ENCODE measurements at regions of chr12 and their contacts with region 1.

Region 1: GRCh38 chr12:52358575-52359350 is 8.5 kb downstream of the KRT85 start:
- DNase-seq: peak; percentile 15 to 66
- ATAC-seq: peak; percentile 41 to 77 (median 49)
- H3K4me3 ChIP-seq: no peak overlapping the region
- H3K4me3 Mint-ChIP-seq: no peak overlapping the region
- H3K27ac ChIP-seq: no peak overlapping the region
- H3K27ac Mint-ChIP-seq: peak overlapping the region in 1 of 2 donors; percentile 25
- H3K4me1 ChIP-seq: peaks cover 44% of the 10 kb centered on the region
- H3K4me1 Mint-ChIP-seq: peaks cover 40 to 44% of the 10 kb centered on the region in 2 donors
- H3K27me3 ChIP-seq: peaks cover 44% of the 10 kb centered on the region
- H3K27me3 Mint-ChIP-seq: peaks cover 48 to 55% of the 10 kb centered on the region in 2 donors
- CTCF ChIP-seq: no peak

Region 2: GRCh38 chr12:52307836-52308805 is 50.6 kb before region 1 on chr12:
- intact Hi-C with region 1: loop called (anchors 10 kb)
- DNase-seq: peak; percentile 50 to 71
- ATAC-seq: peak; percentile 81 to 86 (median 83)
- H3K4me3 ChIP-seq: peak overlapping the region; percentile 19
- H3K4me3 Mint-ChIP-seq: peak overlapping the region; percentile 87
- H3K27ac ChIP-seq: no peak overlapping the region
- H3K27ac Mint-ChIP-seq: peak overlapping the region; percentile 82 to 85
- H3K4me1 ChIP-seq: peaks cover 37% of the 10 kb centered on the region
- H3K4me1 Mint-ChIP-seq: peaks cover 51 to 56% of the 10 kb centered on the region in 2 donors
- H3K27me3 ChIP-seq: peaks cover 24% of the 10 kb centered on the region
- H3K27me3 Mint-ChIP-seq: peaks cover 10 to 60% of the 10 kb centered on the region in 2 donors
- CTCF ChIP-seq: peak; percentile 20